ENCODE measurements at regions of chr9 and their contacts with region 1.

Region 1: GRCh38 chr9:13410566-13411031 is 131.1 kb upstream of the MPDZ start:
- DNase-seq: no peak
- ATAC-seq: no peak
- H3K4me3 ChIP-seq: no peak overlapping the region
- H3K27ac ChIP-seq: no peak overlapping the region
- H3K4me1 ChIP-seq: no peaks in the 10 kb centered on the region
- H3K27me3 ChIP-seq: no peaks in the 10 kb centered on the region
- CTCF ChIP-seq: no peak
- POLR2A ChIP-seq: no peak
- RAD21 ChIP-seq: no peak

Region 2: GRCh38 chr9:13291718-13292117 is 118.9 kb before region 1 on chr9:
- CTCF ChIA-PET with region 1: no interaction called
- POLR2A ChIA-PET with region 1: no interaction called
- dilution Hi-C with region 1: no loop called
- in situ Hi-C with region 1: no loop called
- intact Hi-C with region 1: loop called (anchors 10 kb)
- DNase-seq: no peak
- ATAC-seq: no peak
- H3K4me3 ChIP-seq: no peak overlapping the region
- H3K27ac ChIP-seq: no peak overlapping the region
- H3K4me1 ChIP-seq: no peaks in the 10 kb centered on the region
- H3K27me3 ChIP-seq: no peaks in the 10 kb centered on the region
- CTCF ChIP-seq: no peak
- POLR2A ChIP-seq: no peak
- RAD21 ChIP-seq: no peak